PC-3 (cell line): ENCODE measurements at regions of chr12 and their contacts with region 1.

Region 1: DNA sequence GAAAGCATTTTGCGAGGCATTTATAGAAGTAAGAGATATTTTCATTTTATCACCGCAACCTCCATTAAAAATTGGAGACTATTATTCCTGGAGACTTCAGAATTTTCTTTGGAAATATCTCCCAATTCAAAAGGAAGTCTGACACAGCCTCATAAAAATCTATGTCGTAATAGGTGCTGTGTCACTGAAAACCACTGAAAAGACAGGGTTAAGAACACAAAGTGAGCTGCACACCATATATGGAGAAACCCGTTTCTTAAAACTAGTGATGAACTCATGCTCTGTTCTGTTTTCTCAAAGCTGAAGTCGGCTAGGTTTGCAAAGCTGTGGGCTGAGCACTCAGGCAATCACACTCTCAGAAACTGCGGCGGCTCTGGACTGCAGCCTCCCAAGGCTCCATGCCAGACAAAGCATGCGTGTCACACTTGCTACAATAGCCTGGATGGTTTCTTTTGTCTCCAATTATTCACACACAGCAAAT is at the start of gene GLIPR1:
- DNase-seq: peak; percentile 95
- ATAC-seq: peak; percentile 92
- H3K4me3 ChIP-seq: peak within 1 kb of the TSS; percentile 67
- H3K27ac ChIP-seq: peak within 1 kb of the TSS; percentile 77
- H3K4me1 ChIP-seq: peaks cover 32% of the 10 kb centered on the region
- H3K27me3 ChIP-seq: no peaks in the 10 kb centered on the region
- CTCF ChIP-seq: no peak
- total RNA-seq, gene GLIPR1: 21.3 and 22.2 TPM in 2 replicates

Region 2: DNA sequence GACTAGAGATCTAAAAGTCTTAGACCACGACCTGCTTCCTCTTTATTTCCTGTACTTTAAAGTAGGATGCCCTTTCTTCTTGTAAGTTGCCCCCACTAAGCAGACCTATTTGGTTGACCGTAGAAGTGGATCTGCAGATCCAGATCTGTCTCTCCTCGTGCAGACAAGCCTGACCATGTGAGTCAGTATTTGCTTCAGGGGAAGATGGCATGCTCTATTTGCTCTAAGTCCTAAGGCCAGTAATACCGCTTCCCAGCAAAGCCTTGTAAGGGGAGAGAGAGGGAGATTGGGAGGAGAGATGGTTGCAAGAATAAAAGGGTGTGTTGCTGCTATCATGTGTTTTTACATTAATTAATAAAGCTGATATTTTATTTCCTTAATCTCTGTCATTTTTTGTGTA is 317.6 kb before region 1 on chr12:
- CTCF ChIA-PET with region 1: no interaction called
- POLR2A ChIA-PET with region 1: no interaction called
- intact Hi-C with region 1: loop called (anchors 10 kb)
- DNase-seq: no peak
- ATAC-seq: no peak
- H3K4me3 ChIP-seq: no peak overlapping the region
- H3K27ac ChIP-seq: no peak overlapping the region
- H3K4me1 ChIP-seq: no peaks in the 10 kb centered on the region
- H3K27me3 ChIP-seq: no peaks in the 10 kb centered on the region
- CTCF ChIP-seq: no peak

Region 3: GRCh38 chr12:75177997-75178396 is 302.5 kb before region 1 on chr12:
- CTCF ChIA-PET with region 1: no interaction called
- POLR2A ChIA-PET with region 1: no interaction called
- intact Hi-C with region 1: no loop called
- DNase-seq: peak; percentile 92
- ATAC-seq: peak; percentile 99
- H3K4me3 ChIP-seq: no peak overlapping the region
- H3K27ac ChIP-seq: no peak overlapping the region
- H3K4me1 ChIP-seq: peaks cover 13% of the 10 kb centered on the region
- H3K27me3 ChIP-seq: no peaks in the 10 kb centered on the region
- CTCF ChIP-seq: no peak

Region 4: GRCh38 chr12:75526655-75527511 is 46.4 kb after region 1 on chr12:
- CTCF ChIA-PET with region 1: no interaction called
- POLR2A ChIA-PET with region 1: no interaction called
- intact Hi-C with region 1: no loop called
- DNase-seq: peak; percentile 75
- ATAC-seq: peak; percentile 76
- H3K4me3 ChIP-seq: no peak overlapping the region
- H3K27ac ChIP-seq: no peak overlapping the region
- H3K4me1 ChIP-seq: no peaks in the 10 kb centered on the region; the same call in 1 of the 2 replicates
- H3K27me3 ChIP-seq: no peaks in the 10 kb centered on the region
- CTCF ChIP-seq: peak; percentile 87